Heart right ventricle (tissue), 16 donors: ENCODE measurements at regions of chr17 and their contacts with region 1.

Region 1: DNA sequence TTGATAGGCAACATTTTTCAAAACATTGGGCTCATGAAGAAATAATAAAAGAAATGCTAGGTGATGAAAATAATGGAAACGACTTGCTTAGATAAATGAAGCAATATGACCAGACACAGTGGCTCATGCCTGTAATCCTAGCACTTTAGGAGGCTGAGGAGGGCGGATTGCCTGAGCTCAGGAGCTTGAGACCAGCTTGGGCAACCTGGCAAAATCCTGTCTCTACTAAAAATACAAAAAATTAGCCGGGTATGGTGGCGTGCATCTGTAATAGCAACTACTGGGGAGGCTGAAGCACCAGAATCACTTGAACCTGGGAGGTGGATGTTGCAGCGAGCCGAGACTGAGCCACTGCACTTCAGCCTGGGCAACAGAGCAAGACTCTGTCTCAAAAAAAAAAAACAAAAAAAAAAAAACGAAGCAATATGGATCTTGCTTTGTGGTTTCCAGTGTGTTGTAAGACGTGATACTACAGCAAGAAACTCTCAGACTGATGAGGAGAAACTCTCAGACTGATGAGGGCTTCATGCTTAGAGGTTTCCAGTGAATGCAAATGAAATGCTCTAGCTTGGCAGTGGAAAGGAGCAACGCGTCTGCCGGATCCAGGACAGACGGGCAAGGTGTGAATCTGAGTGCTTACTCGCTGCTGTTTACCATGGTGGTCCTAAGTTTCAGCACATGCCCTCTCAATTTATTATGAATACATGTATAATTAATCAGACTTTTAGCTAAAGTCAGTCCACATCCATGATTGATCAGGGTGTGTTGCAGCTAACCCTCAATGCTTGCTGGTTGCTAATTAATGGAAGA is 11.5 kb upstream of the IGF2BP1 start:
- DNase-seq: no peak
- ATAC-seq: no peak
- H3K4me3 ChIP-seq: no peak overlapping the region
- H3K27ac ChIP-seq: no peak overlapping the region
- H3K4me1 ChIP-seq: no peaks in the 10 kb centered on the region
- H3K27me3 ChIP-seq: peaks cover 0 to 94% (median 88%) of the 10 kb centered on the region in 7 donors
- CTCF ChIP-seq: no peak

Region 2: GRCh38 chr17:48928876-48929811 is 56.5 kb before region 1 on chr17:
- intact Hi-C with region 1: no loop called
- DNase-seq: no peak
- ATAC-seq: no peak
- H3K4me3 ChIP-seq: no peak overlapping the region
- H3K27ac ChIP-seq: peak overlapping the region in 1 of 10 donors; percentile 51
- H3K4me1 ChIP-seq: peaks cover 0 to 20% (median 0%) of the 10 kb centered on the region in 9 donors
- H3K27me3 ChIP-seq: no peaks in the 10 kb centered on the region
- CTCF ChIP-seq: no peak

Region 3: GRCh38 chr17:49003623-49004511 is 18.2 kb after region 1 on chr17:
- intact Hi-C with region 1: loop called in 1 of 10 experiments (anchors 2 kb)
- DNase-seq: no peak
- ATAC-seq: no peak
- H3K4me3 ChIP-seq: no peak overlapping the region
- H3K27ac ChIP-seq: no peak overlapping the region
- H3K4me1 ChIP-seq: no peaks in the 10 kb centered on the region
- H3K27me3 ChIP-seq: peaks cover 14 to 100% (median 99%) of the 10 kb centered on the region in 7 donors
- CTCF ChIP-seq: no peak